ENCODE measurements at regions of chr17 and their contacts with region 1.

Region 1: DNA sequence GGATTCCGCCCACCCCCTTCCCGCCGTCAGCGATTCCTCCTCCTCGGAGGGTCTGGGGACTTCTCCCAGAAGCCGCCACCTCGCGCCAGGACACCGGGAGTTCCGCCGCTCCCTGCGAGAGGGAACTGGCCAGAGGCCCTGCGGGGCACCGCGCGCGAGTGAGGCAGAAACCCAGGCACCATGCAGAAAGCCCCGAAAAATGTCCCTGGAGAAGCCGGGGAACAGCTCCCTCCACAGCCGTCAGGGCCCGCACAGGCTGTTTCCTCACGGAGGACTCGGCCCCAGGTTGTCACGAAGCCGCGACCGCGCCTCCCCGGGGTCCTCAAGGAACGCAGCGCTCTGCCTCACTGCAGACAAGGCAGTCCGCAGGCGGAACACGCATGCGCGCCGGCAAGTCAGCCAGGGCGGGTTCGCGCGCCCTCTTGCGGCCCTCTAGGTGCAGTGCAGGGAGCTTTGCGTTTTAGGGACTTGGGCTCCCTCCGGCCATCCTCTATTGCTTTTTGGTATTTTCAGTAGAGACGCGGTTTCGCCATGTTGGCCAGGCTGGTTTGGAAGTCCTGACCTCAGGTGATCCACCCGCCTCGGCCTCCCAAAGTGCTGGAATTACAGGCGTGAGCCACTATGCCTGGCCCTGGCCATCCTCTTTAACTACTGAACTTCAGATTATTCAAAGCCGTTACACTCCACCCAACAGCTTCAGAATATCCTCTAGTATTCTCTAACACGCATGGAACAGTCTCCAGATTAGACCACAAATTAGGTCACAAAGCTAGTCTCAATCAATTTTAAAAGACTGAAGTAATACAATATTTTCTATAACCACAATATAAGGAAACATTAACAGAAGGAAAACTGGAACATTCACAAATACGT is 20.3 kb upstream of the ZNF287 start:
- DNase-seq: peak; percentile 93 to 98
- ATAC-seq: peak; percentile 97
- H3K4me3 ChIP-seq: peak overlapping the region; percentile 35 to 84
- H3K27ac ChIP-seq: peak overlapping the region in 1 of 2 donors; percentile 35
- H3K4me1 ChIP-seq: no peaks in the 10 kb centered on the region
- H3K27me3 ChIP-seq: no peaks in the 10 kb centered on the region

Region 2: DNA sequence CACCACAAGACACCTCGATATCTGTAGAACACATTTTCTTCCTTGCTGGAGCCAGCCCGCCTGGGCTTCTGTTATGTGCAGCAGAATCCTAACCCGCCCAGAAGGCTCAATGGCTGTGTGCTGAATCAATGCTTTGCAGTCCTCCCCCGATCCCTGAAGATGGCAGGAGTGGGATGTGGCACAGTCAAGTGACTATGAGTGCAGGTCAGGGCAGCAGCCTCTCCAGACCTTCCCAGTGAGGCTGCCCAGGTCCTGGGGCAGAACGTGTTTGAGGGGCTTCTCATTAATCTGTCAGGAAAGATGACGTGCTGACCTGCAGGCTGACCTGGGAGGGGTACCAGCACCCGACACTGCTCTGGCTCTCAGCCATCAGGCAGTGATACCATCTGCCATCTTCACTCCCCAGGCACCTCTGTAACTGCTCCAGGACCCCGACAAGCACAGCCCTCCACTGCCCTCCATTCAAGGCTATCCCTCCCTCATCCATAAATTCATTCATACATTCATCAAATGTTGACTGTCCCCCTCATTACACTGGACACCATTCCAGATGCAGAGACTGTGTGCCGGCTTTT is 132.5 kb before region 1 on chr17:
- intact Hi-C with region 1: loop called in 1 of 2 experiments (anchors 10 kb)
- DNase-seq: no peak
- ATAC-seq: no peak
- H3K4me3 ChIP-seq: no peak overlapping the region
- H3K27ac ChIP-seq: no peak overlapping the region
- H3K4me1 ChIP-seq: no peaks in the 10 kb centered on the region
- H3K27me3 ChIP-seq: no peaks in the 10 kb centered on the region

Region 3: GRCh38 chr17:16537130-16537458 is 52.2 kb before region 1 on chr17:
- intact Hi-C with region 1: loop called in 1 of 2 experiments (anchors 1 kb)
- DNase-seq: no peak
- ATAC-seq: no peak
- H3K4me3 ChIP-seq: no peak overlapping the region
- H3K27ac ChIP-seq: no peak overlapping the region
- H3K4me1 ChIP-seq: no peaks in the 10 kb centered on the region
- H3K27me3 ChIP-seq: no peaks in the 10 kb centered on the region

Region 4: GRCh38 chr17:16568541-16569357 is 20.6 kb before region 1 on chr17 and contains the start of gene ZNF287:
- intact Hi-C with region 1: loop called in 1 of 2 experiments (anchors 2 kb)
- DNase-seq: peak; percentile 96 to 98
- ATAC-seq: peak; percentile 98
- H3K4me3 ChIP-seq: peak within 1 kb of the TSS; percentile 27 to 37
- H3K27ac ChIP-seq: peak within 1 kb of the TSS in 1 of 2 donors; percentile 48
- H3K4me1 ChIP-seq: no peaks in the 10 kb centered on the region
- H3K27me3 ChIP-seq: no peaks in the 10 kb centered on the region
- total RNA-seq, gene ZNF287: 5.5 to 7.4 TPM